AG04449 (cell line): ENCODE measurements at regions of chr19 and their contacts with region 1.

Region 1: DNA sequence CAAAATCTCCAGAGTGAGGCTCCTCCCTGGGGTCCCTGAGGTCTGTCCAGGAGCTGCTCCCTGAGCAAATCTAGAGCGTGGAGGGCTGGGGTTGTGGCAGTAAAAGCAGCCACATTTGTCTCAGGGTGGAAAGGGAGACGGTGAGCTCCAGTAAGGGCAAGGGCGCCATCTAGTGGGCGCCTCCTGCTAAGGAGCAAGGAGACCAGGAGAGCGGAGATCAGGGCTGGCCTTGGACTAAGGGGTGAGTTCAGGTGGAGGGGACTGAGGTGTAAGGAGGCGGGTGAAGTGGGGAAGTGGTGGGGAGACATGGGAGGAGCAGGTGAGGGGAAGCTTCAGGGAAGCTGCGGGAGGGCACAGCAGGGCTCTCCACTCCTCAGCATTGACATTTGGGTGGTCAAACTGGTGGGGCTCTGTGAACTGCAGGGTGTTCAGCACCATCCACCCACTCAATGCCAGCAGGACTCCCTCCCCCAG is 5.3 kb upstream of the CEACAM21 start:
- DNase-seq: no peak
- H3K4me3 ChIP-seq: no peak overlapping the region
- CTCF ChIP-seq: peak; percentile 91

Region 2: DNA sequence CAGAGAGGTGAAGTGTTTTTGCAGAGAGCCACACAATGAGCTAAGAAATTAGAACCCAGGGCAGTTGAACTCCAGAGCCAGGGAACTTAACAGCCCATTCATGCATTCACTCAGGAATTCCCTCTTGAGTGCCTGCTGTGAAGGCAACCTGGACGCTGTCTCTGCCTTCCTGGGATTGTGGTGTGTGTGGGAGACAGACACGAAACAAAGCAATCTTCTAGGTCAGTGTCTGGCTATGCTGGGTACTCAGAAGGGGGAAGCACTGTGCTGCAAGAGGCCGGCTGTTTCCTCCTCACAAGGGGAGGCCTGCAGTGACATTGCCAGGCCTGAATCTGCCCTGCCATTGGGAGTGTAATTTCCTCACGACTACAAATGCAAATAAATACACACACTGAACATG is 163.4 kb before region 1 on chr19:
- CTCF ChIA-PET with region 1: no interaction called
- POLR2A ChIA-PET with region 1: no interaction called
- DNase-seq: no peak
- H3K4me3 ChIP-seq: no peak overlapping the region
- CTCF ChIP-seq: no peak

Region 3: GRCh38 chr19:41555748-41556147 is 14.9 kb before region 1 on chr19:
- CTCF ChIA-PET with region 1: interaction called, 40 read pairs
- POLR2A ChIA-PET with region 1: no interaction called
- DNase-seq: no peak
- H3K4me3 ChIP-seq: no peak overlapping the region
- CTCF ChIP-seq: no peak

Region 4: GRCh38 chr19:41597600-41598041 is 26.9 kb after region 1 on chr19:
- CTCF ChIA-PET with region 1: interaction called, 18 read pairs
- POLR2A ChIA-PET with region 1: no interaction called
- DNase-seq: peak; percentile 10
- H3K4me3 ChIP-seq: no peak overlapping the region
- CTCF ChIP-seq: peak; percentile 86